ENCODE measurements at regions of chr6 and their contacts with region 1.

Region 1: DNA sequence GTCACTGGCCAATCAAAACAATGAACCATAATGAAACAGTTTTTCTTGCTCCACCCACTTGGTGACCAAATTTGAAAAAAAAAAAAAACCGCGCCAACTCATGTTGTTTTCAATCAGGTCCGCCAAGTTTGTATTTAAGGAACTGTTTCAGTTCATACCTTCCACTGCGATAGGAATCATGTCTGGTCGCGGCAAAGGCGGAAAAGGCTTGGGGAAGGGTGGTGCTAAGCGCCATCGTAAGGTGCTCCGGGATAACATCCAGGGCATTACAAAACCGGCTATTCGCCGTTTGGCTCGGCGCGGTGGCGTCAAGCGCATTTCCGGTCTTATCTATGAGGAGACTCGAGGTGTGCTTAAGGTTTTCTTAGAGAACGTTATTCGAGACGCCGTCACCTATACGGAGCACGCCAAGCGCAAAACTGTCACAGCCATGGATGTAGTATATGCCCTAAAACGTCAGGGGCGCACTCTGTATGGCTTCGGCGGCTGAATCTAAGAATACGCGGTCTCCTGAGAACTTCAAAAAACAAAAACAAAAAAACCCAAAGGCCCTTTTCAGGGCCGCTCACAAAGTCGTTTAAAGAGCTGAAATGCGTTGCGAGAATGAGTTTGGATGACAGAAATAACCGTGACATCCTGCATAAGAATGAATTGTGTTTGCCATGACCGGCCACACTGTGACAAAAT is 16.7 kb downstream of the HFE start:
- DNase-seq: peak; percentile 90
- H3K4me3 Mint-ChIP-seq: peak overlapping the region; percentile 90
- H3K27ac Mint-ChIP-seq: peak overlapping the region; percentile 99
- H3K4me1 Mint-ChIP-seq: peaks cover 25% of the 10 kb centered on the region
- H3K27me3 Mint-ChIP-seq: peaks cover 2% of the 10 kb centered on the region

Region 2: DNA sequence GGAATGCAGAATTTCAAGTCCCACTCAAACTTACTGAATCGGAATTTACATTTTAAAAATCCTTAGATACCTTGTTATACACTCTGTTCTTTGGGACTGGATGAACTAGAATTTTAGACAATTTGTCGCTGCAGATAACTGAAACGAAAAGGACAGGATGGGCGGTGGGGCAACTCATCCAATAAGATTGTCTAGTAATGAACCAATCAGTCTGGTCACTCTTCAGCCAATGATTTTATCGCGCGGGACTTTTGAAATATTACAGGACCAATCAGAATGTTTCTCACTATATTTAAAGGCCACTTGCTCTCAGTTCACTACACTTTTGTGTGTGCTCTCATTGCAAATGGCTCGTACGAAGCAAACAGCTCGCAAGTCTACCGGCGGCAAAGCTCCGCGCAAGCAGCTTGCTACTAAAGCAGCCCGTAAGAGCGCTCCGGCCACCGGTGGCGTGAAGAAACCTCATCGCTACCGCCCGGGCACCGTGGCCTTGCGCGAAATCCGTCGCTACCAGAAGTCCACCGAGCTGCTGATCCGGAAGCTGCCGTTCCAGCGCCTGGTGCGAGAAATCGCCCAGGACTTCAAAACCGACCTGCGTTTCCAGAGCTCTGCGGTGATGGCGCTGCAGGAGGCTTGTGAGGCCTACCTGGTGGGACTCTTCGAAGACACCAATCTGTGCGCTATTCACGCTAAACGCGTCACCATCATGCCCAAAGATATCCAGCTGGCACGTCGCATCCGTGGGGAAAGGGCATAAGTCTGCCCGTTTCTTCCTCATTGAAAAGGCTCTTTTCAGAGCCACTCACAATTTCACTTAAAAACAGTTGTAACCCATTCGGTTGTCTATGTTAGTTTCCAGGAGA is 58.6 kb before region 1 on chr6:
- intact Hi-C with region 1: loop called (anchors 1 kb)
- DNase-seq: peak; percentile 82
- H3K4me3 Mint-ChIP-seq: peak overlapping the region; percentile 86
- H3K27ac Mint-ChIP-seq: peak overlapping the region; percentile 98
- H3K4me1 Mint-ChIP-seq: peaks cover 49% of the 10 kb centered on the region
- H3K27me3 Mint-ChIP-seq: no peaks in the 10 kb centered on the region

Region 3: GRCh38 chr6:26054857-26055669 is 48.9 kb before region 1 on chr6:
- intact Hi-C with region 1: loop called (anchors 2 kb)
- DNase-seq: peak; percentile 83
- H3K4me3 Mint-ChIP-seq: peak overlapping the region; percentile 91
- H3K27ac Mint-ChIP-seq: peak overlapping the region; percentile 99
- H3K4me1 Mint-ChIP-seq: peaks cover 42% of the 10 kb centered on the region
- H3K27me3 Mint-ChIP-seq: peaks cover 3% of the 10 kb centered on the region

Region 4: DNA sequence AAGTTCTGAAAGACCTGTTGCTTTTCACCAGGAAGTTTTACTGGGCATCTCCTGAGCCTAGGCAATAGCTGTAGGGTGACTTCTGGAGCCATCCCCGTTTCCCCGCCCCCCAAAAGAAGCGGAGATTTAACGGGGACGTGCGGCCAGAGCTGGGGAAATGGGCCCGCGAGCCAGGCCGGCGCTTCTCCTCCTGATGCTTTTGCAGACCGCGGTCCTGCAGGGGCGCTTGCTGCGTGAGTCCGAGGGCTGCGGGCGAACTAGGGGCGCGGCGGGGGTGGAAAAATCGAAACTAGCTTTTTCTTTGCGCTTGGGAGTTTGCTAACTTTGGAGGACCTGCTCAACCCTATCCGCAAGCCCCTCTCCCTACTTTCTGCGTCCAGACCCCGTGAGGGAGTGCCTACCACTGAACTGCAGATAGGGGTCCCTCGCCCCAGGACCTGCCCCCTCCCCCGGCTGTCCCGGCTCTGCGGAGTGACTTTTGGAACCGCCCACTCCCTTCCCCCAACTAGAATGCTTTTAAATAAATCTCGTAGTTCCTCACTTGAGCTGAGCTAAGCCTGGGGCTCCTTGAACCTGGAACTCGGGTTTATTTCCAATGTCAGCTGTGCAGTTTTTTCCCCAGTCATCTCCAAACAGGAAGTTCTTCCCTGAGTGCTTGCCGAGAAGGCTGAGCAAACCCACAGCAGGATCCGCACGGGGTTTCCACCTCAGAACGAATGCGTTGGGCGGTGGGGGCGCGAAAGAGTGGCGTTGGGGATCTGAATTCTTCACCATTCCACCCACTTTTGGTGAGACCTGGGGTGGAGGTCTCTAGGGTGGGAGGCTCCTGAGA is 16.4 kb before region 1 on chr6 and contains the start of gene HFE:
- intact Hi-C with region 1: loop called (anchors 2 kb)
- DNase-seq: peak; percentile 22
- H3K4me3 Mint-ChIP-seq: peak within 1 kb of the TSS; percentile 83
- H3K27ac Mint-ChIP-seq: no peak within 1 kb of the TSS
- H3K4me1 Mint-ChIP-seq: peaks cover 54% of the 10 kb centered on the region
- H3K27me3 Mint-ChIP-seq: no peaks in the 10 kb centered on the region
- total RNA-seq, gene HFE: 0.13 and 0.37 TPM in 2 replicates

Region 5: GRCh38 chr6:27146706-27147505 is 1043.0 kb after region 1 on chr6:
- intact Hi-C with region 1: loop called (anchors 1 kb)
- DNase-seq: peak; percentile 82
- H3K4me3 Mint-ChIP-seq: no peak overlapping the region
- H3K27ac Mint-ChIP-seq: no peak overlapping the region
- H3K4me1 Mint-ChIP-seq: peaks cover 17% of the 10 kb centered on the region
- H3K27me3 Mint-ChIP-seq: no peaks in the 10 kb centered on the region

Measured in activated T-helper 1 cell treated with anti-CD3 and anti-CD28 coated beads, Interleukin-12 subunit alpha, Interleukin-12 subunit beta, Interleukin-2, Interleukin-4 antibody, amounts not matched to agents 30 ng/mL and 10 ng/mL and 1 ng/mL, durations not matched to agents 14 hours and 24 hours and 36 hours (primary cell).